Aorta (tissue), 5 donors: ENCODE measurements at regions of chr22 and their contacts with region 1.

Region 1: DNA sequence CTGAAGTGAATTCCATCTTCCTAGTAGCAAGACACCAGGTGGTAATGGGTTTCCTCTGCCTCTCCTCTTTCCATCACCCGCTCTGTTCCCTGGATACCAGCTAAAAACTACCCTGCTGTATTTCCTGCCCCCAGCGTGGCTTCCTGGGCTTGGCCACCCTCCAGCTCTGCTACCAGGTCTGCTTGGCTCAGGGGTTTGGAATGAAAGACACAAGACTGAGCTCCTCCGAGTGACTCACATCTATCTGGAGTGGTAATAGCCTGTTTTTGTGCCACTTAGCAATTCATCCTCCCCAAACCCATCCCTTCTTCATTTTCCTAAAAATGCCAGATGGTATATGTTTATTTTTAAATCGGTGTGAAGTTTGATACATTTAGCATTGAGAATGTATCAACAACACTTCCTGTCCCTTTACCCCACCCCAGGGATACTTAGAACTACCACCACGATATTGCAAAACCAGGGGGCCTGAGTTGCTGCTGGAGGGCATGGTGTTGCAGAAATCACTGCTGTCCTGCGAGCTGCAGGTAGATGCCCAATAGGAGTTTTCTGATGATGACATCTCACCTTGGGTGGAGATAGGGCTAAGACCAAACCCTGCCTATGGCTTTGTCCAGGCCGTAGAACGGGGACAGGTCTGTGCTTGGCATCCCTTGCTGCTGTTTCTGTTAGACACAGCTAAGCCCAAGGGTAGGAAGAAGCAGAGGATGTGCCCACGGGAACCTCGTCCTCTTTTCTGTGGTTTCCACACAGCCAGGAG is 7.5 kb upstream of the MICAL3 start:
- DNase-seq: peak; percentile 76 to 86
- ATAC-seq: peak; percentile 6
- H3K4me3 ChIP-seq: no peak overlapping the region
- H3K27ac ChIP-seq: no peak overlapping the region
- H3K4me1 ChIP-seq: no peaks in the 10 kb centered on the region
- H3K27me3 ChIP-seq: no peaks in the 10 kb centered on the region

Region 2: DNA sequence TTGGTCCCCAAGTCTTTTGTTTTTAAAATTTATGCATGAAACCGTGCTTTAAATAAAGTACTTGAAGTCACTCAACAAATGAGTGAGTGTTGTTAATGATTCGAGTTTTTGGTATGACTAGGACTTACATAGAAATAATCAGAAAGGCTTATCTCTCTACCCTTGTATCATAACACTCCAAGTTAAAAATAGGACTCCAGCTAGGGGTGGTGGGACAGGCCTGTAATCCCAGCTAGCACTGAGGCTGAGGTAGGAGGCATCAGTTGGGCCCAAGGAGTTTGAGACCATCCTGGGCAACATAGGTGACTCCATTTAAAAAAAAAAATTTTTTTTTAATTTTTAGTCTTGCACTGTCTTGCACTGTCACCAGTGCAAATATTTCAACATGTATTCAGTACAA is 337.7 kb before region 1 on chr22:
- intact Hi-C with region 1: no loop called
- DNase-seq: no peak
- ATAC-seq: no peak
- H3K4me3 ChIP-seq: no peak overlapping the region
- H3K27ac ChIP-seq: no peak overlapping the region
- H3K4me1 ChIP-seq: no peaks in the 10 kb centered on the region
- H3K27me3 ChIP-seq: no peaks in the 10 kb centered on the region

Region 3: GRCh38 chr22:17910561-17911311 is 121.1 kb before region 1 on chr22:
- intact Hi-C with region 1: loop called in 1 of 2 experiments (anchors 5 kb)
- DNase-seq: peak; percentile 87 to 89
- ATAC-seq: peak; percentile 87
- H3K4me3 ChIP-seq: no peak overlapping the region
- H3K27ac ChIP-seq: peak overlapping the region in 1 of 2 donors; percentile 76
- H3K4me1 ChIP-seq: no peaks in the 10 kb centered on the region
- H3K27me3 ChIP-seq: no peaks in the 10 kb centered on the region

Region 4: GRCh38 chr22:18070556-18071306 is 38.9 kb after region 1 on chr22:
- intact Hi-C with region 1: loop called in 1 of 2 experiments (anchors 5 kb)
- DNase-seq: peak in 1 of 2 donors; percentile 32
- ATAC-seq: no peak
- H3K4me3 ChIP-seq: no peak overlapping the region
- H3K27ac ChIP-seq: no peak overlapping the region
- H3K4me1 ChIP-seq: peaks cover 2 to 6% of the 10 kb centered on the region in 2 donors
- H3K27me3 ChIP-seq: no peaks in the 10 kb centered on the region